MCF 10A (cell line): ENCODE measurements at regions of chr6 and their contacts with region 1.

Region 1: DNA sequence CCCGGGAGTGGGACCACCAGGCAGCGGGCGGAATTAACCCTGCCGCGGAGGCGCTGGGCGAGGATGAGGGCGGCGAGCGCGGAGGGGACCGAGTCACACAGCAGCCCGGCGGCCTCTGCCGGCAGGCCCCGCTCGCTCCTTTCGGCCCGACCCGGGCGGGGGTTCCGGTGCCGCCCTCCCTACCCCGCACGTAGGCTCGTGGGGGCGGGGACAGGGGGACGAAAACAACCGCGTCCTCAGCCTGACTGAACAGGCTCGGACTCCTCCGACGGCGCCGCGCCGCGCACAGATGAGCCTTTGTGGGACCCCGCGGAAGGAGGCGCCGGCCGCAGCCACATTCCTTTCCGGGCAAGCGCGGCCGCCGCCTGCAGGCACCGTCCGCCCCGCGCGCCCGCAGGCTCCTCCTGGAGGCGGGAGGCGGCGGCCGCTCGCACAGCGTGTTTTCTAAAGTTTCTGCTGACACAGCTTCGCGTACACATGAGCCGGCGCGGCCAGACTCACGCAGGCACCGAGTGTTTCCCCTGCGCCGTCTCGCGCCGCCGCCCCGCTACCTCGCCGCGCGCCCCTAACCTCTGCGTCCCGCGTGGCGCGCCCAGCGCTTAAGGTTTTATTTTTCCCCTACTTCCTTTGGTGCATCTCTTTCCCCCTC is 244.3 kb downstream of the ARID1B start:
- DNase-seq: peak; percentile 88
- H3K4me3 Mint-ChIP-seq: peak overlapping the region; percentile 90
- H3K27ac Mint-ChIP-seq: peak overlapping the region; percentile 99
- H3K4me1 Mint-ChIP-seq: peaks cover 10% of the 10 kb centered on the region
- H3K27me3 Mint-ChIP-seq: no peaks in the 10 kb centered on the region
- CTCF ChIP-seq: peak; percentile 46

Region 2: GRCh38 chr6:156781861-156782631 is 239.4 kb before region 1 on chr6:
- CTCF ChIA-PET with region 1: interaction called, 4 read pairs
- POLR2A ChIA-PET with region 1: interaction called, 82 read pairs
- intact Hi-C with region 1: loop called (anchors 1 kb)
- DNase-seq: peak; percentile 16
- H3K4me3 Mint-ChIP-seq: peak overlapping the region; percentile 79
- H3K27ac Mint-ChIP-seq: peak overlapping the region; percentile 97
- H3K4me1 Mint-ChIP-seq: peaks cover 13% of the 10 kb centered on the region
- H3K27me3 Mint-ChIP-seq: no peaks in the 10 kb centered on the region
- CTCF ChIP-seq: no peak

Region 3: DNA sequence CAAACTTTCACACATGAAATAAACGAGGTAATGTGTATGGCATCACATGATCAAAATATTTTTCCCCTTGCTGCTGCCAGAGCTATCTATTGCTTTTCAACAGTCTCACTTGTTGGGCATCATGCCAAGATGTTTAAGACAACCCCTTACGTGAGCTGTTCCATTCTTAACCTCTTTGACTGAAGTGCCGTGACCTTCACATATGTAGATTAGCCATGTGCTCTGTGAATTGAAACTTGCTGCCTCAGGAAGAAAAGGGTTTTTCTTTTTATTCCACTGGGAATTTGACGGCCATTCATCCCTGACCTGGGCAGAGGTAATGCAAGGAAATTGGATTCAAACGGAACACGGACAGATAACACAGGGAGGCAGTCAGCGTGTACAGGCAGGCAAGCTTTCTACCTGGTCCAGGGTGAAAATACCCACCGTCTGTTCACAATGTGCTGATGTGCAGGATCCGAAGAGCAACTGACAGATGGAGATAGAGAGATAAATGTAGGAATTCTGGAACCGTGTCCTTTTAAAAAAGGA is 230.1 kb before region 1 on chr6:
- CTCF ChIA-PET with region 1: interaction called, 3 read pairs
- POLR2A ChIA-PET with region 1: interaction called, 57 read pairs
- intact Hi-C with region 1: no loop called
- DNase-seq: peak; percentile 84
- H3K4me3 Mint-ChIP-seq: peak overlapping the region; percentile 42
- H3K27ac Mint-ChIP-seq: peak overlapping the region; percentile 49
- H3K4me1 Mint-ChIP-seq: peaks cover 22% of the 10 kb centered on the region
- H3K27me3 Mint-ChIP-seq: no peaks in the 10 kb centered on the region
- CTCF ChIP-seq: no peak

Region 4: GRCh38 chr6:156953479-156954146 is 67.9 kb before region 1 on chr6:
- CTCF ChIA-PET with region 1: interaction called, 3 read pairs
- POLR2A ChIA-PET with region 1: interaction called, 77 read pairs
- intact Hi-C with region 1: loop called (anchors 2 kb)
- DNase-seq: peak; percentile 90
- H3K4me3 Mint-ChIP-seq: peak overlapping the region; percentile 58
- H3K27ac Mint-ChIP-seq: peak overlapping the region; percentile 93
- H3K4me1 Mint-ChIP-seq: peaks cover 56% of the 10 kb centered on the region
- H3K27me3 Mint-ChIP-seq: no peaks in the 10 kb centered on the region
- CTCF ChIP-seq: no peak

Region 5: DNA sequence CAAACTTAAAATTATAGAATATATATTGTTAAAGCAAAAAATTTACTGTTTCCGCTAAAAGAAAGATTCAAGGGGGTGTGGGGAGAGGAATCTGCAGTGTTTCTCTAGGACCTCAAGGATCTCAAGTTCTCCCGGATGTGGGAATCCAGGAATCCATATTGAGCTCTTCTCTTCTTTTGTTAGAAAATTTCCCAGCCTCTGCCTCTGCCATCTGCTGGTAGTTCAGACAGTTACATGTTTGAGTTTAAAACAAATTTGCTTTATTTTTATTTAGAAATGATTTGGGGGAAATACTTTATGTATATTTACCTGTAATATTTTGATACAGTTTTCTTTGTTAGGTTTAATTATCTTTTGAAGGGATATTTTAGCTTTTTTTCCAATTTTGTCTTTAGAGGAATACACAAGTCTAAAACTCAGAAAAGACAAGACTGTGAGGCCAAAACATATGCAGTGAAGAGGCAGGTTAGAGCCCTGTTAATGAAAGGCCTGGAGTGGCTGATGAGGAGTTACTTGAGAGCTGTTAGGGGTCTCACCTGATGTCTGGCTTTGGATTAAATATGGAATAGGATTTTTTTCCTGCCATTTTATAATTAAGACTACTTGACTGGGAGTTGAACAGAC is 24.5 kb after region 1 on chr6:
- CTCF ChIA-PET with region 1: interaction called, 7 read pairs
- POLR2A ChIA-PET with region 1: interaction called, 14 read pairs
- intact Hi-C with region 1: no loop called
- DNase-seq: peak; percentile 63
- H3K4me3 Mint-ChIP-seq: no peak overlapping the region
- H3K27ac Mint-ChIP-seq: peak overlapping the region; percentile 35
- H3K4me1 Mint-ChIP-seq: peaks cover 10% of the 10 kb centered on the region
- H3K27me3 Mint-ChIP-seq: no peaks in the 10 kb centered on the region
- CTCF ChIP-seq: peak; percentile 60